ENCODE measurements at regions of chr4 and their contacts with region 1.

Region 1: DNA sequence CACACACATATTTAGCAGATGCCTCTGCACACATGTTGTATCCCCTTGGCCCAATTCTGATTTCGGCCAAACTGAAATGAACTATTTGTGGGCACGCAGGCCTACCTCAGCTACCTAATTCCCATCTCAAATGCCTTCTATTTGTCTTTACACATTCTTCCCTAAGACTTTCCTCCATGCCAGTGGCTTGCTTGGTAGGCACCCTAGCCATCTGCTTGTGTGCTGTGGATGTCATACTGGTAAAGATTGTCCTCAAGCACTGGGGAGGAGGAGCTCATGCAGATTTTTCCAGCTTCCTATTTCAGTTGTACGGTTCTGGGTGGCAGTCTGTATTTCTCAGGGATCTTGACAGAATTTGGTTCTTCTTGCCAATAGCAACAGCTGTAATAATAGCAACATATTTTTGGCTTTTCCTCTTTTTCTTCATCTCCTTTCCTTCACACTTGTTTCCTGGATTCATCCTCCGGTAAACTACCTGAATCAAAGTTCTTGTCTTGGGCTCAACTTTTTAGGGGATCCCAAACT is 514.3 kb downstream of the ADGRL3 start:
- DNase-seq: no peak
- H3K4me3 ChIP-seq: no peak overlapping the region
- H3K27ac ChIP-seq: no peak overlapping the region
- H3K4me1 ChIP-seq: no peaks in the 10 kb centered on the region
- H3K27me3 ChIP-seq: no peaks in the 10 kb centered on the region
- CTCF ChIP-seq: no peak
- POLR2A ChIP-seq: no peak

Region 2: GRCh38 chr4:61693520-61693919 is 20.9 kb before region 1 on chr4:
- intact Hi-C with region 1: no loop called
- DNase-seq: no peak
- H3K4me3 ChIP-seq: no peak overlapping the region
- H3K27ac ChIP-seq: no peak overlapping the region
- H3K4me1 ChIP-seq: no peaks in the 10 kb centered on the region
- H3K27me3 ChIP-seq: no peaks in the 10 kb centered on the region
- CTCF ChIP-seq: no peak
- POLR2A ChIP-seq: no peak

Region 3: GRCh38 chr4:62015043-62015739 is 300.7 kb after region 1 on chr4:
- intact Hi-C with region 1: loop called (anchors 10 kb)
- DNase-seq: no peak
- H3K4me3 ChIP-seq: no peak overlapping the region
- H3K27ac ChIP-seq: no peak overlapping the region
- H3K4me1 ChIP-seq: no peaks in the 10 kb centered on the region
- H3K27me3 ChIP-seq: no peaks in the 10 kb centered on the region
- CTCF ChIP-seq: no peak
- POLR2A ChIP-seq: no peak

Measured in breast epithelium (tissue), 4 donors.